ENCODE measurements at regions of chr1 and their contacts with region 1.

Region 1: DNA sequence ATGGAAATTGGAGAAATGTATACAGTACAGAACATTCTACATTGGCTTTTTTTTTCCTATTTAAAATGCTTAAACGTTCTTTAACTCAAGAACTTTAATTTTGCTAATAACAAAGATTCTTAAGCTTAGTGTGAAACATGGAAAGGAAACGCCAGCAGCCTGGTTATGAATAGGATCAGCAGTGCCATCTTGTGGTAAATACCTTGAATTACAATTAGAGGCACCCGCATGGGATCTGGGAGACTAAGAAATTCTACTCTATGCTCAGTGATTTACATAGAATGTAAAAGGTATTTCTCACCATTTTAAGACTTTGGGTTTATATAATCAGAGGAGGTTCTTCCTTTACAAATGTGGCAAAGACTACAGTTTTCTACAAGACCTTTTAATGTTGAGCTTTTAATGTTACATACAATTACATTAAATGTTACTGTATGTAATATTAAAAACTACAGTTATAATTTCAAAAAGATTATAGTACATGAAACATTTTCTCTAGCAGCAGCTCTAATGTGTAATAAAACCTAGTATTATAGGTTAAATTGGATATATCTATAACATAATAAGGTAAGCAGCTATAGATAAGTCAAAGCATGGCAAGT is 32.1 kb upstream of the APOBEC4 start:
- DNase-seq: peak; percentile 11
- ATAC-seq: peak; percentile 75
- H3K4me3 ChIP-seq: no peak overlapping the region
- H3K27ac ChIP-seq: no peak overlapping the region
- H3K4me1 ChIP-seq: 0 out of 2 replicates have a peak, but pooled peaks cover 2% of the 10 kb centered on the region
- H3K27me3 ChIP-seq: no peaks in the 10 kb centered on the region
- CTCF ChIP-seq: peak; percentile 60 to 77 (median 65)
- EP300 ChIP-seq: no peak
- POLR2A ChIP-seq: no peak
- RAD21 ChIP-seq: peak; percentile 81

Region 2: GRCh38 chr1:183281553-183282091 is 403.6 kb before region 1 on chr1:
- CTCF ChIA-PET with region 1: interaction called, 16 read pairs
- POLR2A ChIA-PET with region 1: no interaction called
- RAD21 ChIA-PET with region 1: interaction called, 3 read pairs
- SMC1A ChIA-PET with region 1: interaction called, 7 read pairs
- in situ Hi-C with region 1: no loop called
- intact Hi-C with region 1: loop called (anchors 5 kb)
- DNase-seq: peak; percentile 54
- ATAC-seq: peak; percentile 91
- H3K4me3 ChIP-seq: no peak overlapping the region
- H3K27ac ChIP-seq: no peak overlapping the region
- H3K4me1 ChIP-seq: peaks cover 3% of the 10 kb centered on the region; the same call in 1 of the 2 replicates
- H3K27me3 ChIP-seq: no peaks in the 10 kb centered on the region
- CTCF ChIP-seq: peak; percentile 85 to 93 (median 88)
- EP300 ChIP-seq: no peak
- POLR2A ChIP-seq: no peak
- RAD21 ChIP-seq: peak; percentile 88

Region 3: GRCh38 chr1:183604038-183604808 is 81.0 kb before region 1 on chr1:
- CTCF ChIA-PET with region 1: interaction called, 16 read pairs
- POLR2A ChIA-PET with region 1: no interaction called
- RAD21 ChIA-PET with region 1: interaction called, 21 read pairs
- SMC1A ChIA-PET with region 1: interaction called, 18 read pairs
- in situ Hi-C with region 1: no loop called
- intact Hi-C with region 1: no loop called
- DNase-seq: peak; percentile 89
- ATAC-seq: peak; percentile 71
- H3K4me3 ChIP-seq: no peak overlapping the region
- H3K27ac ChIP-seq: peak overlapping the region; percentile 64
- H3K4me1 ChIP-seq: peaks cover 61% of the 10 kb centered on the region
- H3K27me3 ChIP-seq: no peaks in the 10 kb centered on the region
- CTCF ChIP-seq: no peak
- EP300 ChIP-seq: peak; percentile 25 to 72; a peak in 2 of 4 replicates
- POLR2A ChIP-seq: no peak
- RAD21 ChIP-seq: no peak

Region 4: GRCh38 chr1:183630748-183631147 is 54.5 kb before region 1 on chr1:
- CTCF ChIA-PET with region 1: interaction called, 40 read pairs
- POLR2A ChIA-PET with region 1: no interaction called
- RAD21 ChIA-PET with region 1: interaction called, 31 read pairs
- SMC1A ChIA-PET with region 1: interaction called, 30 read pairs
- in situ Hi-C with region 1: no loop called
- intact Hi-C with region 1: no loop called
- DNase-seq: no peak
- ATAC-seq: peak; percentile 10
- H3K4me3 ChIP-seq: peak overlapping the region; percentile 39; the same call in 1 of the 2 replicates
- H3K27ac ChIP-seq: no peak overlapping the region
- H3K4me1 ChIP-seq: no peaks in the 10 kb centered on the region; the same call in 1 of the 2 replicates
- H3K27me3 ChIP-seq: no peaks in the 10 kb centered on the region
- CTCF ChIP-seq: no peak
- EP300 ChIP-seq: no peak
- POLR2A ChIP-seq: no peak
- RAD21 ChIP-seq: no peak

Region 5: GRCh38 chr1:183670178-183670577 is 15.0 kb before region 1 on chr1:
- CTCF ChIA-PET with region 1: interaction called, 44 read pairs
- POLR2A ChIA-PET with region 1: interaction called, 7 read pairs
- RAD21 ChIA-PET with region 1: interaction called, 8 read pairs
- SMC1A ChIA-PET with region 1: interaction called, 33 read pairs
- in situ Hi-C with region 1: no loop called
- intact Hi-C with region 1: no loop called
- DNase-seq: no peak
- ATAC-seq: no peak
- H3K4me3 ChIP-seq: no peak overlapping the region
- H3K27ac ChIP-seq: no peak overlapping the region
- H3K4me1 ChIP-seq: no peaks in the 10 kb centered on the region
- H3K27me3 ChIP-seq: no peaks in the 10 kb centered on the region
- CTCF ChIP-seq: no peak
- EP300 ChIP-seq: no peak
- POLR2A ChIP-seq: no peak
- RAD21 ChIP-seq: no peak

Region 6: GRCh38 chr1:183821889-183822611 is 136.8 kb after region 1 on chr1:
- CTCF ChIA-PET with region 1: interaction called, 10 read pairs
- POLR2A ChIA-PET with region 1: no interaction called
- RAD21 ChIA-PET with region 1: interaction called, 4 read pairs
- SMC1A ChIA-PET with region 1: interaction called, 4 read pairs
- in situ Hi-C with region 1: no loop called
- intact Hi-C with region 1: no loop called
- DNase-seq: no peak
- ATAC-seq: peak; percentile 32; the same call in 2 of the 3 replicates
- H3K4me3 ChIP-seq: no peak overlapping the region
- H3K27ac ChIP-seq: no peak overlapping the region
- H3K4me1 ChIP-seq: peaks cover 9% of the 10 kb centered on the region
- H3K27me3 ChIP-seq: no peaks in the 10 kb centered on the region
- CTCF ChIP-seq: no peak
- EP300 ChIP-seq: no peak
- POLR2A ChIP-seq: no peak
- RAD21 ChIP-seq: no peak

Measured in GM12878 (cell line).